ENCODE measurements at regions of chr11 and their contacts with region 1.

Region 1: DNA sequence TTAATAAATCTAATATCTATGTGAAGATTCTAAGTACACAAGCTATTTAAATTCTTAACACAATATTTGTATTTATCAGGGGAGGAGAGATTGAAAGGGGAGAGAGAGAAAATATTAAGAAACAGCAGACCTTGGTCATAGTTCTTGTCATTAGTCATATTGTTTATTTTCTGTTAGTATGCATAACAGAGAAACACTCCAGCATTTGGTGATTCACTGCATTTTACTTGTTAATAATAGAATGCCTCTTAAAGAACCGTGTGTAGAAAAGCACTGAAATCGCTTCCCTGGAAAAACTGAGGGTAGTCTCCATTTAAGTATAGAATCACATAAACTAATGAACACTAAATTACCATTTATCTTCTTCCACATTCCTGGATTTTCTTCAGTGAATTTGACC is 122.7 kb upstream of the TRPC6 start:
- DNase-seq: no peak
- H3K4me3 ChIP-seq: no peak overlapping the region
- H3K27ac ChIP-seq: no peak overlapping the region
- H3K4me1 ChIP-seq: no peaks in the 10 kb centered on the region
- H3K27me3 ChIP-seq: no peaks in the 10 kb centered on the region
- CTCF ChIP-seq: no peak
- EP300 ChIP-seq: no peak
- POLR2A ChIP-seq: no peak

Region 2: GRCh38 chr11:101807531-101807930 is 101.0 kb after region 1 on chr11:
- in situ Hi-C with region 1: no loop called
- intact Hi-C with region 1: no loop called
- DNase-seq: no peak
- H3K4me3 ChIP-seq: no peak overlapping the region
- H3K27ac ChIP-seq: no peak overlapping the region
- H3K4me1 ChIP-seq: no peaks in the 10 kb centered on the region
- H3K27me3 ChIP-seq: no peaks in the 10 kb centered on the region
- CTCF ChIP-seq: no peak
- EP300 ChIP-seq: no peak
- POLR2A ChIP-seq: no peak

Region 3: DNA sequence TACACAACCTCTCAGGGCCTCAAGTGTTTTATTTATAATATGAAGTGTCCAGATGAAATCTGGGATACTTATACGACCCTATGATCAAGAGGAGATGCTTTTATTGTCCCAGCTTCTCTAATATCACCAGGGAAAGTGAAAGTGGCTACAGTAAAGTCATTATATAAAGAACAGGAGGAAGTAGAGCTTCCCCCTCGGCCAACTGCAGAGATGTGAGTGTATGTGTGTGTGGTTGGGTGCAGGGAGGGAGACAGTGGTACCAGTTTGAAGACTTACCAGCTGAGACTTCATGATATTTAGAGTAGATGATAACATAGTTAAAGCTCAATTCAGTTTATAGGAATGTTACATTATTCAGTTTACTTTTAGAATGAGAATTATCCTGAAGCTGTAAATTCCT is 1956.3 kb after region 1 on chr11:
- in situ Hi-C with region 1: no loop called
- intact Hi-C with region 1: loop called (anchors 10 kb)
- DNase-seq: no peak
- H3K4me3 ChIP-seq: no peak overlapping the region
- H3K27ac ChIP-seq: no peak overlapping the region
- H3K4me1 ChIP-seq: no peaks in the 10 kb centered on the region
- H3K27me3 ChIP-seq: no peaks in the 10 kb centered on the region
- CTCF ChIP-seq: no peak
- EP300 ChIP-seq: no peak
- POLR2A ChIP-seq: no peak

Measured in transverse colon (tissue), 4 donors.